A549 (cell line): ENCODE measurements at regions of chr5 and their contacts with region 1.

Region 1: DNA sequence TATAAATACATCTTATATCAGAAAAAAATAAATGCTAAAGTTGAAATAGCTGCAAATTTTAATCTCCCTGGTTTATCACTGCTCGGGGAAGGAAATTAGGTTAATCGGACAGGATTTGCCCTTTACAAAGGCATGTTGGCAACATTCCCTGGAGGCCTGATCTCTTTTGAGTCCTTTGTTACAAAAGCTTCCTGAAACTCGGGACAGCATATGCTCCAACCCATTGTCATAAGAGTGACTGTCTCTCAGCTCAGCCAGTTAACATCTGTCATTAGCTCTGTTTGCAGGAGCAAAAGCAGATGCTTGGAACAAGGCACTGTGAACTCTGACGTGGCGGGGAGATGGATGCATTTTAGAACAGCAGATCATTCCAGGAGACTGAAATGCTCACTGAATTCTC is 80.6 kb downstream of the MYO10 start:
- DNase-seq: no peak
- ATAC-seq: peak in 1 of 2 experiments; percentile 8; a peak in 1 of 6 replicates
- H3K4me3 ChIP-seq: no peak overlapping the region
- H3K27ac ChIP-seq: no peak overlapping the region; a peak in 1 of 6 replicates
- H3K4me1 ChIP-seq: peaks cover 55% of the 10 kb centered on the region
- CTCF ChIP-seq: no peak
- EP300 ChIP-seq: no peak
- POLR2A ChIP-seq: no peak
- RAD21 ChIP-seq: no peak

Region 2: GRCh38 chr5:16871746-16872339 is 16.4 kb after region 1 on chr5:
- CTCF ChIA-PET with region 1: interaction called, 15 read pairs
- POLR2A ChIA-PET with region 1: no interaction called
- DNase-seq: no peak
- ATAC-seq: peak in 1 of 2 experiments; percentile 8; a peak in 1 of 6 replicates
- H3K4me3 ChIP-seq: no peak overlapping the region
- H3K27ac ChIP-seq: peak overlapping the region; percentile 70 to 83; a peak in 5 of 6 replicates
- H3K4me1 ChIP-seq: peaks cover 54% of the 10 kb centered on the region
- CTCF ChIP-seq: no peak
- EP300 ChIP-seq: no peak
- POLR2A ChIP-seq: no peak
- RAD21 ChIP-seq: no peak

Region 3: GRCh38 chr5:16944816-16945562 is 89.5 kb after region 1 on chr5:
- CTCF ChIA-PET with region 1: no interaction called
- POLR2A ChIA-PET with region 1: no interaction called
- DNase-seq: no peak
- ATAC-seq: no peak
- H3K4me3 ChIP-seq: no peak overlapping the region
- H3K27ac ChIP-seq: no peak overlapping the region
- H3K4me1 ChIP-seq: no peaks in the 10 kb centered on the region
- CTCF ChIP-seq: no peak
- EP300 ChIP-seq: no peak
- POLR2A ChIP-seq: no peak
- RAD21 ChIP-seq: no peak